Cardiac septum (tissue), 1 donor: ENCODE measurements at regions of chr2 and their contacts with region 1.

Region 1: GRCh38 chr2:71798266-71799012 is 345.1 kb downstream of the DYSF start:
- DNase-seq: peak; percentile 74

Region 2: GRCh38 chr2:71545572-71546274 is 252.7 kb before region 1 on chr2:
- intact Hi-C with region 1: loop called (anchors 5 kb)
- DNase-seq: peak; percentile 74

Region 3: GRCh38 chr2:71700658-71701397 is 97.6 kb before region 1 on chr2:
- intact Hi-C with region 1: loop called (anchors 5 kb)
- DNase-seq: peak; percentile 90

Region 4: GRCh38 chr2:71923887-71924533 is 125.6 kb after region 1 on chr2:
- intact Hi-C with region 1: loop called (anchors 5 kb)
- DNase-seq: no peak

Region 5: DNA sequence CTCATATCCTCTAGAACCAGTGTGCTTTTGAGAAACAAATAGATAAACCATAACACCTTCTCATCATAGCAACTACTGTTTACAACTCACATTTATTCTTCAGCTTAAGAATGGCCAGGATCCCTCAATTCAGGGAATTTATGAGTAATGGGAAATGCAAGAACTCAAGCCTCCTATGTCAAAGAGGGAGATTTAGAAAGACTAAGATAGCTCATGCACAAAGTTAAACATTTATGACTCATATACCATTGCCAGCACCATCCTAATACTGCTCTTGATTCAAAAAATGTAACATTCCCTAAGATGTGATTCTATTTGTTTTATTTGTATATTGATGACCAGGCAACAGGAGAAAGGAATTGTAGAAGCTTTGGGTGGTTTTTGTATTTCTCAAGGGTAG is 176.4 kb after region 1 on chr2:
- intact Hi-C with region 1: no loop called
- DNase-seq: no peak

Region 6: GRCh38 chr2:72129681-72130340 is 331.4 kb after region 1 on chr2:
- intact Hi-C with region 1: no loop called
- DNase-seq: peak; percentile 67

Region 7: DNA sequence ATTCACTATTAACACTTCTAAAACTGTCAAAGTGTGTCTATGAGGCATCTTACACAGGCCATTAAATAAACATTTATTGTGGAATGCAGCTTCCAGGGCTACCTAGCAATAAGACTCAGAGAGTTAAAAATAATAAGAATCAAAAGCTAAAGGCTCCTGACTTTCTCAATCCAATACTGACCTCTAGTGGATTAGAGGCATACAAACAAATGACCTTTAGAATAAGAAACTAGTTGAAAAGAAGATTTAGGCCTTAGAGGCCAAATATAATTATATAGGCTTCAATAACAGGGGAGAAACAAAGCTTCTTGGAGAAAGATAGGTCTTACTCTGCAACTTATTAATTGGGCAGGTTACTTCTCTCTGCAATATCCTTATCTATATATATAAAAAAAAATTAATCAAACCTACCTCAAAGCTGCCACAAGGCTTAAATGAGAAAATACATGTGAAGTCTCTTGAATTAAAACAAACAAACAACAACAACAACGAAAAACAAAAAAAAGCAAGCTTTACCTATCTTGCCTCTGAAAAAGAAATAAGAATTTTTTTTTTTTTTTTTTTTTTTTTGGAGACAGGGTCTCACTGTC is 781.2 kb after region 1 on chr2:
- intact Hi-C with region 1: loop called (anchors 10 kb)
- DNase-seq: no peak